Activated T-helper 2 cell treated with anti-CD3 and anti-CD28 coated beads, Interferon-gamma antibody, Interleukin-2, Interleukin-4, amounts not matched to agents 10 μg/mL and 5 μg/mL and 100 μg/mL, durations not matched to agents 14 hours and 24 hours and 36 hours (primary cell): ENCODE measurements at regions of chr14 and their contacts with region 1.

Region 1: DNA sequence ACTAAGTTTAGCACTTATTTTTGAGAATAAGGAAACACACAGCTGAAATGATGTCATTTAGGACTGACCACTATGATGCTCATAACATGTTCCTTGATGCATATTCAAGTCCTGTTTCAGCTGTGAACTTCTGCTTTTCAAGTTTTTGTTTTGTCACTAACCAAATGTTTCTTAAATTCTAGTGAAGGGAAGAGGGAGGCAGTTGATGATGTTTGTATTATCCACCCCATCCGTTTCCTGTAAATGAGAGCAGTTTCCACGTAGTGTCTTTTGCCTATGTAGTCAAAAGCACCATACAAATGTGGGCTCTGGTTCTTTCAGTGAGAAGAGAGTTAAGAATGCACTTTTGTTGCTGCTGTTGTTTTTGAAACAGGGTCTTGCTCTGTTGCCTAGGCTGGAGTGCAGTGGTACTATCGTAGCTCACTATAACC is 491.8 kb downstream of the PCNX1 start:
- DNase-seq: no peak
- H3K4me3 Mint-ChIP-seq: peak overlapping the region; percentile 37
- H3K27ac Mint-ChIP-seq: peak overlapping the region; percentile 92
- H3K4me1 Mint-ChIP-seq: peaks cover 54% of the 10 kb centered on the region
- H3K27me3 Mint-ChIP-seq: no peaks in the 10 kb centered on the region

Region 2: DNA sequence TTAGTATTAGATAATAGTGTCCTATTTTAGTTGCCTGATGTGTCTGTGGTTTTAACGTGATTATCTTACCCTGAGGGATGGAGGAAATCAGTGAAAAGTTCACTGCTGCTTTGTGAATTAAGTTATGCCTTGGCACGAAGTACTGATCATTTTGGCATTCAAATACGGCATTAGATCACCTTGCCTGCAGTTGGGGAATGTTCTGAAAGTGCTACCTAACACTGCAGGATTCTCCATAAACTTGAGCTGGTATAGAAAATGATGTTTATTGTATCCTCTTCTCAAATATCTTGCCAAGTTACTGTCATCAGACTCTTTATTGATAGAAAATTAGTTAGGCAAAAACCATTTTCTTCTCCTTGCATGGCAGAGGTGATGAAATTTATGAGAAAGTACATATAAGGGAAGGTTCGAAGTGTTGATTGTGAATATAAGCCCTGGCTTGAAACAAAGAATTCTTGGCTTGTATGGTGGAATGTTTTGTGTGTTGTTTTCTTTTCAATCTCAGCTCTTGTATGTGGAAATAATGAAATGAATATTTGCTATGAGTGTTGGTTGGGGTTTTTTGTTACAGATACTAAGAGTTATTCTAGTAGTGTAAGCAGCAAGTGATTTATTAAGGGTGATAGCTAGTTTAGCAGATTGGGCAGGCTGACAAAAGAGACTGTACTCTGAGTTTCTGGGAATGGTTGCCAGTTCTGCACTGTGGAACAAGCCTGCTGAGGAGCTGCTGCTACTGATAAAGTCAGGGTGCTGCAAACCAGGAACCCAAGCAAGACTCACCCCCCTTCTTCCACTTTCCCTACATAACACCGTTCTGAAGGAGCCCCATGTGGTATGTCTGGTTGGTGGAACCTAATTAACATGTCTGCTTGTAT is 43.5 kb before region 1 on chr14:
- intact Hi-C with region 1: loop called (anchors 5 kb)
- DNase-seq: no peak
- H3K4me3 Mint-ChIP-seq: no peak overlapping the region
- H3K27ac Mint-ChIP-seq: no peak overlapping the region
- H3K4me1 Mint-ChIP-seq: peaks cover 44% of the 10 kb centered on the region
- H3K27me3 Mint-ChIP-seq: no peaks in the 10 kb centered on the region

Region 3: GRCh38 chr14:71371711-71372396 is 27.2 kb before region 1 on chr14:
- intact Hi-C with region 1: loop called (anchors 2 kb)
- DNase-seq: no peak
- H3K4me3 Mint-ChIP-seq: no peak overlapping the region
- H3K27ac Mint-ChIP-seq: peak overlapping the region; percentile 71
- H3K4me1 Mint-ChIP-seq: peaks cover 26% of the 10 kb centered on the region
- H3K27me3 Mint-ChIP-seq: no peaks in the 10 kb centered on the region